ENCODE measurements at regions of chr6 and their contacts with region 1.

Region 1: DNA sequence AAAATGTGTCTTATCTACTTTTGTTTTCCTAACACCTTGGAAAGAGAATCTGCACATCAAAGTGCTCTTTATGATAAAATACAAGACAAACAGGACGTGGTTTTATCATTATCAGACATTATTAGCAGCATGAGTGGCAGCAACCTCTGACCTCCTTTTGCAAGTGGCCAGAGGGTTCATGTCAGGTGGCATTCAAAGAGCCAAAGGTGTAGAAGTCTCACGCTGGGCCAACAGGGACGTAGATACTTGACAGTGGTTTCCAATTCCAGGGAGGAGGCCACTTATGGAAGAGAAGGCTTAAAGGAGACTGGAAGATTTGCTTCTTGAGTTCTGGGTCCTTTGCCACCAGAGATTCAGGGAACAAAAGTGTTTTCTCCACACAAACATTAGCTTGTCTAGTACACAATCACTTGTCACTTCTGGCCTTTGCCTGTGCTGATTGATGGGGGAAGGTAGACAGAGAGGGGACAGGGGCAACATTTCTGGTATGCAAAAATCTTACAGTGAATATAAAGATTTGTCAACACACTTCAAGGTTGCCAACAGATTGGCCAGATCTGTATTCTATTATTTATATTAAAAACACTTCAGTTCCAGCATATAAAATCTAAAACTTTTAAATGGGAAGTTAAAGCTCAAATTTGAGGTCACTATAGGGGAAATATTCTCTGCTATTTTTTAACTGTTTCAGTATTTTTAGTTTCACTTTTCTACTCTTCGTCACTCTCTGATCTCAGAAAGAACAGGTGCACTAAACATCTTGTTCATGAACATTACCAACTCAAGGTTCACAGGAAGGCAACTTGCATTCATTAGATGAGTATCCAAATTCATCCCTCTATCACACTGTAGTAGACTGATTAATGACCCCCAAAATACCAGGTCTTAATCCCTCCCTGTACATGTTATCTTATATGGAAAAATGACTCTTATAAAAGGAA is 52.1 kb upstream of the FBXO30 start:
- DNase-seq: peak; percentile 77
- H3K4me3 ChIP-seq: peak overlapping the region; percentile 58
- H3K27ac ChIP-seq: peak overlapping the region; percentile 96
- H3K4me1 ChIP-seq: peaks cover 83% of the 10 kb centered on the region
- CTCF ChIP-seq: no peak

Region 2: DNA sequence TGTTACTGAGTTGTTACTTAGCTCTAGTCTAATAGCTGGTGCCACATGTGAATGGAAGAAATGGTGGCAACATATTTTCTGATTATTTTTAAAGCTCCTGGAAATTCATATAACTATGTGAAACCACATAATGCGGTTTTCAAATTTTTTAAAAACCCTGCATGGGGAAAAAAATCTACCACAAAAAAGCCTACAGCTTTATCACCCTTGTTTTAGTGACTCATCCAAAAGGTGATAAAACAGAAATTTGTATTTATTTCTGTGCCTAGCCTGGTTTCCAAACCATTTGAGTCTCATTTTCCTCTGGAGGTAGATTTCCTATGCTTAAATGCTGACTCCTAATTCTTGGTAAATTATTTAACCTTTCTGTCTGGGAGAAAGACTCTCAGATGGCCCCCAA is 46.7 kb before region 1 on chr6:
- CTCF ChIA-PET with region 1: no interaction called
- POLR2A ChIA-PET with region 1: interaction called, 69 read pairs
- intact Hi-C with region 1: no loop called
- DNase-seq: no peak
- H3K4me3 ChIP-seq: no peak overlapping the region
- H3K27ac ChIP-seq: no peak overlapping the region
- H3K4me1 ChIP-seq: peaks cover 10% of the 10 kb centered on the region
- CTCF ChIP-seq: no peak

Region 3: GRCh38 chr6:145904868-145905267 is 38.1 kb after region 1 on chr6:
- CTCF ChIA-PET with region 1: no interaction called
- POLR2A ChIA-PET with region 1: no interaction called
- intact Hi-C with region 1: no loop called
- DNase-seq: peak; percentile 51
- H3K4me3 ChIP-seq: peak overlapping the region; percentile 26
- H3K27ac ChIP-seq: peak overlapping the region; percentile 72
- H3K4me1 ChIP-seq: peaks cover 36% of the 10 kb centered on the region
- CTCF ChIP-seq: no peak

Region 4: GRCh38 chr6:145963216-145964068 is 96.7 kb after region 1 on chr6:
- CTCF ChIA-PET with region 1: no interaction called
- POLR2A ChIA-PET with region 1: interaction called, 5 read pairs
- intact Hi-C with region 1: loop called (anchors 5 kb)
- DNase-seq: peak; percentile 65
- H3K4me3 ChIP-seq: peak overlapping the region; percentile 84
- H3K27ac ChIP-seq: peak overlapping the region; percentile 40
- H3K4me1 ChIP-seq: peaks cover 41% of the 10 kb centered on the region
- CTCF ChIP-seq: no peak

Measured in OCI-LY7 (cell line).